ENCODE measurements at regions of chr13 and their contacts with region 1.

Region 1: GRCh38 chr13:97109841-97110492 is 112.2 kb upstream of the MBNL2 start:
- DNase-seq: peak; percentile 91 to 92 (median 92)
- ATAC-seq: peak; percentile 99
- H3K4me3 ChIP-seq: no peak overlapping the region
- H3K27ac ChIP-seq: peak overlapping the region in 2 of 4 donors; percentile 24 to 58
- H3K4me1 ChIP-seq: peaks cover 10% of the 10 kb centered on the region
- H3K27me3 ChIP-seq: no peaks in the 10 kb centered on the region
- CTCF ChIP-seq: peak; percentile 96 to 99 (median 96)
- POLR2A ChIP-seq: no peak

Region 2: DNA sequence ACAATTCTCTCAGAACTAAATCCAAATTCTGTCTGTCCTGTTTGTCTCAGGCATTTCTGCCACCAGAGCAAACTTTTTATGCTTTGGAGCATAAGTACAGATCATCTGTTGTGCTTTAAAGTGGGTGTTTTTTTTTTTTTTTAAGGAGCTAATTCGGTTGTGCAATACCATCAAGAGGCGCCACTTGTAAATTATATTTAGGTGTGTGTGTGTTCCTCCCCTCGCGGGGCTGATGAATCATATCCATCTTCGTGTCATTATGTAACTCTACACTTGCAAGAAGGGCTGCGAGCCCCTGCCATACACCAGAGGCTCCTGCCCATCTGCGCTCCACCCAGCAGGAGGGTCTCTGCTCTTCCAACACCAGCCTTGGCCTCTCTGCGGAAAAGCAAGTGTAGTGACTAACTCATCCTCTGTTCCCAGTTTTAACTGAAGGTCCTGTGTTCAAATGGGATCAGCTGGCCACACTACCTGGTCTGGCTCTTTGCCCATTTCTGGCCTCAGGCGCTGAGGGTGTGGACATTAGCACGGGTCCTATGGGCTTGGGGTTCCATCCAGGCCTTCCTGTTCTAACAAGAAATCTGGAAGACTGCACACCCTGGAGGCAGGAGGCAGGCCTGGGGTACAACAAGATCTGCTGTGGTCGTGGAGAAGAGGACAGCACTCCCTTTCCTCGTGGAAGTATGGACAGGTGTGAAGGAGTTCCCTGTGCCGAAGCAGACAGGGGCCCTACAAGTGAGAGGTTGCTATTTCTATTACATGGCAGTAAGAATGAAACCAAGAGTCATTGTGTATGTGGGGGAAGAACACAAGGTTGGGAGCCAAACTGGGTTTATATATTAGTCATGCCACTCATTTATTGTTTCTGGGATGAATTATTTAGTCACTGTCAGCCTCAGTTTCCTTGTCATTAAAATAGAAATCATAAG is 16.1 kb after region 1 on chr13:
- intact Hi-C with region 1: loop called (anchors 2 kb)
- DNase-seq: no peak
- ATAC-seq: no peak
- H3K4me3 ChIP-seq: no peak overlapping the region
- H3K27ac ChIP-seq: no peak overlapping the region
- H3K4me1 ChIP-seq: peaks cover 13% of the 10 kb centered on the region
- H3K27me3 ChIP-seq: no peaks in the 10 kb centered on the region
- CTCF ChIP-seq: no peak
- POLR2A ChIP-seq: no peak

Region 3: DNA sequence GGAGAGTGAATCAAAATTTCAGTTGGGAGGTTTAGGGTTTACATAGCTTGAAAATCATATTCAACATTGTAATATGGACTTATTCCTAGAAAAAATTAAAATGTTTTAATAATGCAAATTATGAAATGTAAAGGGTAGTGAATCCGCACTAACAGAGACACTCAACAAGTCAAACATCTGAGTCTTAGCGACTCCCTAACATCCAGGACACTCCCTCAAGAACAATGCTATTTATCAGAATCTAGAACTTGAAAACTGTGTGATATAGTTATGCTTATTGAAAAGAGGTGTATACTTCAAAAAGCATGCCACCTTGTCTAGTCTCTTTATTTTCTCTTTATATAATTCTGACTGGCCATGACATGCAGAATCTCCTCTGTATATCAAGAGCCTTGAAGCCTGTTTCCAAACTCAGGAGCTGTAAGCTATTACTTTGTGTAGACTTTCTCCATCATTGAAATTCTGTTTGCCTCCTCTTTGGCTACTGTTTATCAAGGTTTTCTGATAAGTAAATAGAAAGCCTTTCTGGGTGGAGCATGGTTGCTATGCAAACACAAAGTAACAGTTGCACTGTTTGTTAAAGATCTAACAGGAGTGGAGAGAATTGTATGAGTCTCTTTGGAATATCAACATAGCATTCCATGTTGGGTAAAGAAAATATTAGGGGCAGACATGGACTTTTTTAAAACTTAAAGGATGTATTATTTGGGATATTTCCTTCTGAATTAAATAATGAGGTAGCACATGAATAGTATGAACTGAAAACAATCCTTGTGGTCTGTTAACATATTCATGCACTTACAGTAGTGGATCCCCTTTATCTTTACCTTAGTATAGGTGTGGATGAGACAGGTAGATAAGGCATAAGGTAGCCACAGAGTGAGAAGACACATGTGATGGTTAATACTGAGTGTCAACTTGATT is 55.8 kb after region 1 on chr13:
- intact Hi-C with region 1: no loop called
- DNase-seq: peak in 2 of 4 donors; percentile 6 to 9
- ATAC-seq: peak; percentile 83
- H3K4me3 ChIP-seq: no peak overlapping the region
- H3K27ac ChIP-seq: no peak overlapping the region
- H3K4me1 ChIP-seq: peaks cover 12% of the 10 kb centered on the region
- H3K27me3 ChIP-seq: no peaks in the 10 kb centered on the region
- CTCF ChIP-seq: no peak
- POLR2A ChIP-seq: no peak

Region 4: GRCh38 chr13:97212601-97213040 is 102.7 kb after region 1 on chr13:
- intact Hi-C with region 1: loop called (anchors 10 kb)
- DNase-seq: peak; percentile 32 to 54 (median 42)
- ATAC-seq: peak; percentile 69
- H3K4me3 ChIP-seq: no peak overlapping the region
- H3K27ac ChIP-seq: no peak overlapping the region
- H3K4me1 ChIP-seq: no peaks in the 10 kb centered on the region
- H3K27me3 ChIP-seq: no peaks in the 10 kb centered on the region
- CTCF ChIP-seq: peak in 6 of 7 experiments; percentile 33 to 59 (median 49)
- POLR2A ChIP-seq: no peak

Region 5: GRCh38 chr13:97344265-97345175 is 234.6 kb after region 1 on chr13:
- intact Hi-C with region 1: no loop called
- DNase-seq: peak; percentile 60 to 76 (median 72)
- ATAC-seq: peak; percentile 74
- H3K4me3 ChIP-seq: no peak overlapping the region
- H3K27ac ChIP-seq: peak overlapping the region in 3 of 4 donors; percentile 49 to 54 (median 54)
- H3K4me1 ChIP-seq: peaks cover 49% of the 10 kb centered on the region
- H3K27me3 ChIP-seq: no peaks in the 10 kb centered on the region
- CTCF ChIP-seq: peak; percentile 42 to 74 (median 65)
- POLR2A ChIP-seq: no peak

Region 6: DNA sequence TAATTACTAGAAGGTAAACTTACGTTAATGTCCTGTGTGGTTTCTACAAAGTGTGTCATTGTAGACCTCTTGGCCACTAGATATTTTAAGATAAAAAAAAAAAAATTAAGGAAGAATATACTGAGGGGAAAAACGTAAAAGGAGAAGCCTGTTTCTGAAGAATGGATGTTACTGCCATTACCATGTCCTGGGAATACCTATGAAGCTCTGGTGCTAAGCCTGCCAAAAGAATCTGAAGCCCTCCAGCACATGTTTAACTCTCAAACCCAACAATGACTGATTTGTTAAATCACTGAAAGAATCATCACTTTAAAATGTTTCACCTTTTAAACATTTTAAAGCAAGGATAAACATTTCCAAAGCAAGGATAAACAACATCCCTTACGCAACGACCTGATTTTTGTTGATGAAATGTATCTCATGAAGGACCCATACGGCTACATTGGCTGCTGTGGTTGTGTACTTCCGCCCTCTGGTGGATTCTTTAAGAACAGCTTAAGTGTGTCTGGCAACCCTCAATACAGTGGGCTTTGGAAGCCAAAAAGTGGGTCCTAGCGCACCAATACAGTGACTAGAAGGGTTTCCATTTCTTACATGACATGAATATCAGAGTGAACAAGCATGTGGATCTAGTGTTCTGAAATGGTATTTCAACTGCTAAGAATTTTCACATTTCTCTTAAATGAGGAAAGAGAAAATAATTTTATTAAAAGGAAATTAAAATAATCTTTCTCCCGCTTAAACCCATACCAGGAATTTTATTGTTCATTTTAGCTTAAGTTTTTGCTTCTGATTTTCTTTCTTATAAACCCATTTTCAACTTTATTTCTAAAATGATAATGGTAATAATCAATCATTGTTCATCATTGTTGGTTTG is 249.5 kb after region 1 on chr13:
- intact Hi-C with region 1: loop called (anchors 5 kb)
- DNase-seq: peak; percentile 42 to 64 (median 54)
- ATAC-seq: peak; percentile 85
- H3K4me3 ChIP-seq: no peak overlapping the region
- H3K27ac ChIP-seq: no peak overlapping the region
- H3K4me1 ChIP-seq: no peaks in the 10 kb centered on the region
- H3K27me3 ChIP-seq: no peaks in the 10 kb centered on the region
- CTCF ChIP-seq: peak; percentile 61 to 81 (median 76)
- POLR2A ChIP-seq: no peak

Measured in body of pancreas (tissue), 4 donors.